ENCODE measurements at regions of chr13 and their contacts with region 1.

Region 1: GRCh38 chr13:97109841-97110492 is 112.2 kb upstream of the MBNL2 start:
- DNase-seq: peak; percentile 83
- ATAC-seq: peak; percentile 93
- H3K4me3 Mint-ChIP-seq: peak overlapping the region; percentile 38
- H3K27ac Mint-ChIP-seq: no peak overlapping the region
- H3K4me1 Mint-ChIP-seq: peaks cover 15% of the 10 kb centered on the region
- H3K27me3 Mint-ChIP-seq: peaks cover 25% of the 10 kb centered on the region
- CTCF ChIP-seq: peak; percentile 68

Region 2: DNA sequence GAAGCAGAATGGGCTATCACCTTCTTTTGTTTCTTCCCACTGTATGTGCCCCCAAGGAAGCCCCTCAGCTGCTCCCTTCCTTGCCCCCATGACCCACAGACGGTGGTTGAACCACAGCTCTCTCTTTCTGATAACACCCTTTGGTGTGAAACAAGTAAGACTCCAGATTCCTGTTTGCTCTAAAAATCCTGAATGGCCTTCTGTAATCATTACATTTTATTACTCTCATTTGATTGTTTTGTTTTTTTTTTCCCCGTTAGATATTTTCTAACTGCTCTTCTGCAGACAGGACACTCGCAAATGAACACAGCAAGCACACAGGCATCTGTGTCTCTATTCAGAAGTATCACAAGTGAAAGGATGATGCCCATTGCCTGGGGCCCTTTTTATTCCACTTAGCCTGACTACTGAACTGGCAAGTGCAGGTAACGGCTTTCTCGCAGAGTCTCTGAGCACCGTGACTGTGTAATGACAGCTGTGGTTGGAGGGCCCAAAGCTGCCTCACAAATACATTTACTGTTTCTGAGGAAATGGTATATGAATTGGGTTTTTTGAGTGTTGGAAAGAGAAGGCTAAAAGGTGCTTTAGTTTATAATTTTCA is 175.0 kb before region 1 on chr13:
- CTCF ChIA-PET with region 1: no interaction called
- POLR2A ChIA-PET with region 1: no interaction called
- DNase-seq: no peak
- ATAC-seq: no peak
- H3K4me3 Mint-ChIP-seq: no peak overlapping the region
- H3K27ac Mint-ChIP-seq: no peak overlapping the region
- H3K4me1 Mint-ChIP-seq: no peaks in the 10 kb centered on the region
- H3K27me3 Mint-ChIP-seq: no peaks in the 10 kb centered on the region
- CTCF ChIP-seq: no peak

Region 3: DNA sequence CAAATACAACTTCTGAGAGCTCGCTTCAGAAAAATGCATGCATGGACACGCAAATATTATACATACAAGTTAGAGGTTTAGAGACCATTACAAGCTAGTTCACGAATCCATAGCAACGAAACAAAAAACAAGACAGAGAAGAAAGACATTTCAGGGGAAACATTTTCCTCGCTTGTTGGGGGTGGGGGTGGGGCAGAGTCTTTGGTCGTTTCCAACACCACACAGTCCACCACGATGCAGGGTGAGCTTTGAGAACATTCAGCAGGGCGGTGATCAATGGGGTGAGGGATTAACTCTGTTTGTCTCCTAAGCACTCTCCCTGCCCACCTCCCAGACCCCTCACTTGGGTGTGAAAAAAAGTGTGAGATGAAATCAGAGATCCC is 116.3 kb before region 1 on chr13:
- CTCF ChIA-PET with region 1: no interaction called
- POLR2A ChIA-PET with region 1: no interaction called
- DNase-seq: no peak
- ATAC-seq: peak; percentile 62
- H3K4me3 Mint-ChIP-seq: peak overlapping the region; percentile 78
- H3K27ac Mint-ChIP-seq: no peak overlapping the region
- H3K4me1 Mint-ChIP-seq: peaks cover 19% of the 10 kb centered on the region
- H3K27me3 Mint-ChIP-seq: peaks cover 78% of the 10 kb centered on the region
- CTCF ChIP-seq: no peak

Region 4: DNA sequence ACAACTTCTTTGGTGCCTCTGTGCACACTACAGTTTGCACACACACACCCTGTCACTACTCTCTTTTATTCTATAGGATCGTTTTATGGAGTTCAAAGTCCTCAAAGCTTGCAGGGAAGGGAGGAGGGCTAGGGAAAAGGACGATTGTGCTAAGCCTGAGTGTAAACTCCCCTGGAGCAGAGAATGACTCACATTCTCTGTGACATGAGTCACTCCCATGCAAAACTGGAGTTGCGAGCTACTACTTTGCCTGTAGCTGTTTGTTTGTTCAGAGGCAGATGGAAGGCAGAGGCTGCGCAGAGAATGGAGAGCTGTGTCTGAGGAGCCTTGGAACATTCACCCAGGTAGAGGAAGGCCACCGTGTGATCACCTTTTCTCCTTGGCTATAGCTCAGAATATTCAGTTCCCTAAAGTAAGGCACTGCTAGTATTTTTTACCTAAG is 31.6 kb after region 1 on chr13:
- CTCF ChIA-PET with region 1: interaction called, 10 read pairs
- POLR2A ChIA-PET with region 1: interaction called, 3 read pairs
- DNase-seq: peak; percentile 17
- ATAC-seq: peak; percentile 91
- H3K4me3 Mint-ChIP-seq: peak overlapping the region; percentile 37
- H3K27ac Mint-ChIP-seq: no peak overlapping the region
- H3K4me1 Mint-ChIP-seq: peaks cover 18% of the 10 kb centered on the region
- H3K27me3 Mint-ChIP-seq: peaks cover 52% of the 10 kb centered on the region
- CTCF ChIP-seq: no peak

Region 5: GRCh38 chr13:97221989-97222700 is 112.2 kb after region 1 on chr13 and contains the start of gene MBNL2:
- CTCF ChIA-PET with region 1: interaction called, 37 read pairs
- POLR2A ChIA-PET with region 1: interaction called, 6 read pairs
- DNase-seq: peak; percentile 63
- ATAC-seq: peak; percentile 96
- H3K4me3 Mint-ChIP-seq: peak within 1 kb of the TSS; percentile 78
- H3K27ac Mint-ChIP-seq: peak within 1 kb of the TSS; percentile 83
- H3K4me1 Mint-ChIP-seq: peaks cover 35% of the 10 kb centered on the region
- H3K27me3 Mint-ChIP-seq: peaks cover 93% of the 10 kb centered on the region
- CTCF ChIP-seq: no peak
- total RNA-seq, gene MBNL2: 0.85 to 1.9 TPM (median 1.7 TPM) in 3 replicates

Region 6: GRCh38 chr13:97344265-97345175 is 234.6 kb after region 1 on chr13:
- CTCF ChIA-PET with region 1: interaction called, 16 read pairs
- POLR2A ChIA-PET with region 1: no interaction called
- DNase-seq: peak; percentile 53
- ATAC-seq: peak; percentile 83
- H3K4me3 Mint-ChIP-seq: no peak overlapping the region
- H3K27ac Mint-ChIP-seq: no peak overlapping the region
- H3K4me1 Mint-ChIP-seq: no peaks in the 10 kb centered on the region
- H3K27me3 Mint-ChIP-seq: no peaks in the 10 kb centered on the region; the same call in 1 of the 2 replicates
- CTCF ChIP-seq: no peak